Heart left ventricle (tissue), 16 donors: ENCODE measurements at regions of chr6 and their contacts with region 1.

Region 1: GRCh38 chr6:15615802-15616201 is 47.0 kb downstream of the DTNBP1 start:
- DNase-seq: no peak
- ATAC-seq: peak in 3 of 4 donors; percentile 34 to 50 (median 42)
- H3K4me3 ChIP-seq: no peak overlapping the region
- H3K27ac ChIP-seq: no peak overlapping the region
- H3K4me1 ChIP-seq: peaks cover 0 to 41% (median 7%) of the 10 kb centered on the region in 12 donors
- H3K27me3 ChIP-seq: no peaks in the 10 kb centered on the region
- CTCF ChIP-seq: no peak
- POLR2A ChIP-seq: no peak

Region 2: GRCh38 chr6:14200047-14200446 is 1415.8 kb before region 1 on chr6:
- intact Hi-C with region 1: loop called in 1 of 10 experiments (anchors 10 kb)
- DNase-seq: no peak
- ATAC-seq: no peak
- H3K4me3 ChIP-seq: no peak overlapping the region
- H3K27ac ChIP-seq: no peak overlapping the region
- H3K4me1 ChIP-seq: no peaks in the 10 kb centered on the region
- H3K27me3 ChIP-seq: no peaks in the 10 kb centered on the region
- CTCF ChIP-seq: no peak
- POLR2A ChIP-seq: no peak